SK-N-SH (cell line): ENCODE measurements at regions of chr16 and their contacts with region 1.

Region 1: GRCh38 chr16:19389246-19389645 is 28.4 kb upstream of the TMC5 start:
- DNase-seq: peak; percentile 60
- H3K4me3 ChIP-seq: no peak overlapping the region
- H3K27ac ChIP-seq: no peak overlapping the region
- H3K4me1 ChIP-seq: no peaks in the 10 kb centered on the region; a peak in 1 of 4 replicates
- H3K27me3 ChIP-seq: no peaks in the 10 kb centered on the region
- CTCF ChIP-seq: peak; percentile 50
- EP300 ChIP-seq: no peak
- RAD21 ChIP-seq: peak; percentile 62

Region 2: GRCh38 chr16:19348578-19349315 is 40.5 kb before region 1 on chr16:
- CTCF ChIA-PET with region 1: no interaction called
- POLR2A ChIA-PET with region 1: no interaction called
- DNase-seq: peak; percentile 73
- H3K4me3 ChIP-seq: no peak overlapping the region; a peak in 1 of 4 replicates
- H3K27ac ChIP-seq: peak overlapping the region in 1 of 2 experiments; percentile 96; a peak in 2 of 4 replicates
- H3K4me1 ChIP-seq: peaks cover 0 to 18% of the 10 kb centered on the region in 2 experiments; a peak in 1 of 4 replicates
- H3K27me3 ChIP-seq: no peaks in the 10 kb centered on the region
- CTCF ChIP-seq: no peak
- EP300 ChIP-seq: peak in 1 of 2 experiments; percentile 83; a peak in 2 of 4 replicates
- RAD21 ChIP-seq: no peak; the same call in 1 of the 2 replicates

Region 3: GRCh38 chr16:19375561-19376158 is 13.6 kb before region 1 on chr16:
- CTCF ChIA-PET with region 1: interaction called, 16 read pairs
- POLR2A ChIA-PET with region 1: no interaction called
- DNase-seq: peak; percentile 77
- H3K4me3 ChIP-seq: peak overlapping the region in 1 of 2 experiments; percentile 51; a peak in 1 of 4 replicates
- H3K27ac ChIP-seq: no peak overlapping the region
- H3K4me1 ChIP-seq: no peaks in the 10 kb centered on the region
- H3K27me3 ChIP-seq: no peaks in the 10 kb centered on the region; the same call in 1 of the 2 replicates
- CTCF ChIP-seq: peak; percentile 89
- EP300 ChIP-seq: no peak
- RAD21 ChIP-seq: peak; percentile 99

Region 4: GRCh38 chr16:19424478-19424877 is 35.2 kb after region 1 on chr16:
- CTCF ChIA-PET with region 1: interaction called, 11 read pairs
- POLR2A ChIA-PET with region 1: no interaction called
- DNase-seq: no peak
- H3K4me3 ChIP-seq: no peak overlapping the region
- H3K27ac ChIP-seq: no peak overlapping the region
- H3K4me1 ChIP-seq: no peaks in the 10 kb centered on the region
- H3K27me3 ChIP-seq: no peaks in the 10 kb centered on the region
- CTCF ChIP-seq: no peak
- EP300 ChIP-seq: no peak
- RAD21 ChIP-seq: no peak